GM12878 (cell line): ENCODE measurements at regions of chr2 and their contacts with region 1.

Region 1: DNA sequence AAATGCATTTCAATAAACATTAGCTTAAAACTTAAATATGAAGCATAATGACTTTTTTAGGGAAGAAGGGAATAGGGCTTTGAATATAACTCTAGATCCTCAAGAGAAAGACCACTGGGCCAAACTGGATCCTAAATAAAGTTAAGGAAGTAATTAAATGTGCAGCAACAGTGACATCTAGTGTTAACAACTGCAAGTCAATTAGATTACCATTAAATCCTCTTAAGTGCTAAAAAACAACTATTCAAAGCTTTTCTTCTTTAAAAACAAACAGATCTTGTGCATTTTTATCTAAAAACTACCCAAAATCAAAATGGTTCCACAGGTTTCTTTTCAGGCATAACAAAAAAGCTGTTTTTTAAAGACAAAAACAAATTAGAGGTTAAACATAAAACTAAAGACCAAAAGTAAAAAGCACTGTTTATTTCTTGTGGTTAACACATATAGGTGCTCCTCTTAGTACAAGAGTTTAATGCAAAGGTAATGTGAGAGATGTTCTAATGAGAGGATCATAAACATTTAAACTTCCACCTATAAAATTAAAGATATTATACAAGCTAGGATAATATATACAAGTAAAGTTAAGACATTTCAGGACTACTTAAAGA is 111.4 kb downstream of the THADA start:
- DNase-seq: no peak
- ATAC-seq: peak; percentile 34
- H3K4me3 ChIP-seq: no peak overlapping the region
- H3K27ac ChIP-seq: no peak overlapping the region
- H3K4me1 ChIP-seq: peaks cover 22% of the 10 kb centered on the region
- H3K27me3 ChIP-seq: no peaks in the 10 kb centered on the region
- CTCF ChIP-seq: peak in 2 of 3 experiments; percentile 59 to 73; a peak in 5 of 6 replicates
- EP300 ChIP-seq: no peak
- POLR2A ChIP-seq: no peak
- RAD21 ChIP-seq: peak; percentile 76

Region 2: DNA sequence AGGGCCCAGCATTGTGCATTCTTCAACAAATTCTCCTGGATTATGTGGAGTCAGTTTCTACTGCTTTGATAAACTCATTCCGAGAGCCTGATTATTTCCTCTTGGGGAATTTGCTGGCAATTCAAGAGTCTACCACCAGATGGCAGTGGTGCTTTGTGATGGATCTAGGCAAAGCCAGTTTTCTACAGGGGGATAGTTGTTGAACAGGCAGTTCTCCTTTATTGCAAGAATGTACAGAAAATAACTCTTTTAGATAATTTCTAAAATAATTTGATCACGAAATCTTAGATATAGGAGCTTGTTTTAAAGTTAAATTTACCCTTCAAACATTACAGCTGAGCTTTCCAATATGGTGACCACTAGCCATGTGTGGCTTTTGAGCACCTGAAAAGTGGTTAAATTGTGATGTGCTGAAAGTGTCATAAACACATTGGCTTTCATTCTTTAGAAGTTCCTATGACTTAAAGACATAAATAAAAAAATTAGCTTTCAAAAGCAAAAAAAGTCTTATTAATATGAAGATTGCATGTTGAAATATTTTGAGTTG is 625.3 kb before region 1 on chr2:
- CTCF ChIA-PET with region 1: interaction called, 24 read pairs
- POLR2A ChIA-PET with region 1: no interaction called
- RAD21 ChIA-PET with region 1: interaction called, 5 read pairs
- SMC1A ChIA-PET with region 1: interaction called, 4 read pairs
- in situ Hi-C with region 1: no loop called
- intact Hi-C with region 1: no loop called
- DNase-seq: peak; percentile 52
- ATAC-seq: peak; percentile 70
- H3K4me3 ChIP-seq: no peak overlapping the region
- H3K27ac ChIP-seq: no peak overlapping the region
- H3K4me1 ChIP-seq: no peaks in the 10 kb centered on the region
- H3K27me3 ChIP-seq: peaks cover 0 to 2% of the 10 kb centered on the region in 2 experiments; a peak in 1 of 4 replicates
- CTCF ChIP-seq: peak; percentile 68 to 90 (median 86)
- EP300 ChIP-seq: no peak
- POLR2A ChIP-seq: no peak
- RAD21 ChIP-seq: peak; percentile 94

Region 3: DNA sequence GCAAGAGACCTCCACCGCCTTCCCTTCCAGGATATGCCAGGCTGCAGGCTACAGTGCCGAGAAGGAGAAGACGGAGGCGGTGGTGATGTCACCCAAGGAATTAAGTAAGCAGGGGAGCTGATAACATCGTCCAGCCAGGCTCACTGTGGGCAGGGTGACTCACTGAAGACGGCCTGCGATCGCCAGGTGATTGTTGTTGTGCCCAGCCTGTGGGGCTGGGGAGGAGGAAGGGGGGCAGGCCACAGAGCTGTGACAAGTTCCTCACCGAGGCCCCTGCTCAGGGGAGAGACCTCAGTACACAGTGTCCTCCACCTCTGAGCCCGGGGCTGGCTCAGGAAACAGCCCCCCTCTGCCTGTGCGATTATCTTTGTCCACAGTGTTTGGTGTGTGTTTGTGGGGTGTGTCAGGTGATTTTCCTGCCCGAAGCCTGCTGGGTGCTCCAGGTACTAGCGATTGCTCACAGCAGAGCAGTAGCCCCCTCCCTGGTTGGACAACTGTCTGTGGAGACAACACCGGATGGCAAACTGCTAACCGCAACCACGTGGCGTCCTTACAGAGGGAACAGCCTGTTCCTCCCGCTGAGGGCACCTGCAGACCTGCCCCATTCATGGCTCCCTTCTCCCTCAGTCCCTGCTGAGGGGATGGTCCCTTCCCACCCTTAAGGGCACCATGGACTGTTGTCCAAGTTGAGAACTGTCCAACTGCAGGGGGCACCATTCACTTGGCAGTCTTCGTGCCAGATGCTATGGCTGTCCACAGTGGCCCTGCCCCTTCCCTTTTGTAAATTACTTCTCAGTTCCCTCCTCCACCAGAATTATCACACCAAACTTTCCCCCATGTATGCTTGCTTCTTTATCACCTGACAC is 353.2 kb before region 1 on chr2:
- CTCF ChIA-PET with region 1: interaction called, 109 read pairs
- POLR2A ChIA-PET with region 1: interaction called, 3 read pairs
- RAD21 ChIA-PET with region 1: interaction called, 84 read pairs
- SMC1A ChIA-PET with region 1: interaction called, 108 read pairs
- in situ Hi-C with region 1: loop called (anchors 5 kb)
- intact Hi-C with region 1: loop called (anchors 1 kb)
- DNase-seq: no peak
- ATAC-seq: peak; percentile 81
- H3K4me3 ChIP-seq: no peak overlapping the region
- H3K27ac ChIP-seq: no peak overlapping the region
- H3K4me1 ChIP-seq: peaks cover 43% of the 10 kb centered on the region
- H3K27me3 ChIP-seq: no peaks in the 10 kb centered on the region
- CTCF ChIP-seq: peak; percentile 61 to 82 (median 62); a peak in 5 of 6 replicates
- EP300 ChIP-seq: no peak; a peak in 1 of 4 replicates
- POLR2A ChIP-seq: no peak
- RAD21 ChIP-seq: peak; percentile 78

Region 4: GRCh38 chr2:43278337-43279220 is 205.8 kb before region 1 on chr2:
- CTCF ChIA-PET with region 1: interaction called, 8 read pairs
- POLR2A ChIA-PET with region 1: no interaction called
- RAD21 ChIA-PET with region 1: interaction called, 12 read pairs
- SMC1A ChIA-PET with region 1: interaction called, 12 read pairs
- in situ Hi-C with region 1: no loop called
- intact Hi-C with region 1: no loop called
- DNase-seq: no peak
- ATAC-seq: no peak
- H3K4me3 ChIP-seq: no peak overlapping the region
- H3K27ac ChIP-seq: no peak overlapping the region
- H3K4me1 ChIP-seq: peaks cover 6% of the 10 kb centered on the region; the same call in 1 of the 2 replicates
- H3K27me3 ChIP-seq: no peaks in the 10 kb centered on the region
- CTCF ChIP-seq: no peak
- EP300 ChIP-seq: no peak
- POLR2A ChIP-seq: no peak
- RAD21 ChIP-seq: no peak

Region 5: DNA sequence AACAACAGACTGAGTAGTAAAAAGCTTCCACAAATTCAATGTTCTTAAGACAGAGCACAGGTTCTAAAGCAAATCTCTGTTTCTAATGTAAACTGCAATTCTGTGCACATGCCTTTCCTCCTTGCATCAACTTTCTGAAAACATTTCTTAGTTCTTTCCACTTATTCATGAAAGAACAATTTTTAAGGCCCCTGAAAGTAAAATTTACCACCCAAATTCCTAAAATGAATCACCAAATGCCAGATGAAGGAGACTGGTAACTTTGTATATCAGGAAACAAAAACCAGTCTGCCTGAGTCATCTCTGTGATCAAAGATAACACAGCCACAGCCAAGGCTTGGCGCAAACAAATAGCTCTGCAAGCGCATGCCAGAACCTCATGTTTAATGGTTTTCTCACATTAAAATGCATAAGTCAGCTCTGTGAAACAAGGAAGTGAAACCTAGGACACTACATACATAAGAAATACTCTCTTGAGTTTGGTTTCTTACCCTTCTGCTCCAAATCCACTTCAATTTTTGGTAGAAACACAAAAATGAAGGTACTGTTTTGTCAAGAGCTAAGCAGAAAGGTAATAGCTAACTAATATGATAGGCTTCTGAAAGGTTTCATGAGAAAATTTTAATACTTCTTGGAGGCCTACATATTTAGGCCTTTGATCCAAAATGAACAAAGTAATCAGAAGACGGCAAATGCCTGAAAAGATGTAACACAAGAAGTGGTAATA is 58.0 kb before region 1 on chr2:
- CTCF ChIA-PET with region 1: interaction called, 38 read pairs
- POLR2A ChIA-PET with region 1: interaction called, 11 read pairs
- RAD21 ChIA-PET with region 1: interaction called, 125 read pairs
- SMC1A ChIA-PET with region 1: interaction called, 108 read pairs
- in situ Hi-C with region 1: no loop called
- intact Hi-C with region 1: loop called (anchors 1 kb)
- DNase-seq: peak; percentile 96
- ATAC-seq: peak; percentile 83
- H3K4me3 ChIP-seq: no peak overlapping the region
- H3K27ac ChIP-seq: peak overlapping the region; percentile 94
- H3K4me1 ChIP-seq: peaks cover 44% of the 10 kb centered on the region
- H3K27me3 ChIP-seq: no peaks in the 10 kb centered on the region
- CTCF ChIP-seq: no peak
- EP300 ChIP-seq: peak; percentile 96 to 98
- POLR2A ChIP-seq: 0 out of 2 replicates have a peak, but pooled peaks have one; percentile 27
- RAD21 ChIP-seq: no peak; the same call in 1 of the 2 replicates

Region 6: GRCh38 chr2:43537137-43537536 is 52.7 kb after region 1 on chr2:
- CTCF ChIA-PET with region 1: interaction called, 60 read pairs
- POLR2A ChIA-PET with region 1: no interaction called
- RAD21 ChIA-PET with region 1: interaction called, 25 read pairs
- SMC1A ChIA-PET with region 1: interaction called, 47 read pairs
- in situ Hi-C with region 1: no loop called
- intact Hi-C with region 1: no loop called
- DNase-seq: no peak
- ATAC-seq: no peak
- H3K4me3 ChIP-seq: no peak overlapping the region
- H3K27ac ChIP-seq: no peak overlapping the region
- H3K4me1 ChIP-seq: no peaks in the 10 kb centered on the region
- H3K27me3 ChIP-seq: no peaks in the 10 kb centered on the region
- CTCF ChIP-seq: no peak
- EP300 ChIP-seq: no peak
- POLR2A ChIP-seq: no peak
- RAD21 ChIP-seq: no peak